Naive thymus-derived CD4-positive, alpha-beta T cell (primary cell): ENCODE measurements at regions of chr13 and their contacts with region 1.

Region 1: DNA sequence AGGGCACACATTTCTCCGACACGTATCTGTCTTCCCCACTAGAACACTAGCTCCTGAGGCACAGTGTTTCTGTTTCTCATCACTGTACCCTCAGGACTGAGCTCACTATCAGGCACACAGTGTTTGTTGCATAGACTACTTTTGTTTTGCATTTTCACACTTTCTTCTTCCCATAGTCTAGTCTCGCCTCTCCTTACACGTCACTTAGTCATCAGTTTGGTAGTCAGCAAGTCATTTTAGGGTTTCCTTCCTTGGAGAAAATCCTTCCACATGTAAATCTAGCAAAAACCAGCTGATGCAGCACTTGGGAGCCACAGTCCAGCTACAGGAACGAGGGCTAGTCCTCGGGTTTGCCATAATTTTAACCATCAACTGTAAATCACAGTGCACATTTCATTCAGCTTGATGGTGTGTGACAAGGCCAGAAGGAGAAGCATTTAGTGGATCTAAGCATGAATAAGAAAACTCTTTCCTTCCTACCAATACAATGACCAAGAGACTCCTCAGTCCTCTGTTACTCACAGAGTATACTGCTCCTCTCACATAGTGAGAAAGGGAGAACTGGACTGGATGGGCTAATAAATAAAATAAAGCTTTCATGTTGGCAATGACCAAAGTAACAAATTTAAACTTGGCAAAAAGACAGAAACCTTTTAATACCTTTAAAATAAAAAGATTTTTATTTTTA is 221.0 kb downstream of the KLF12 start:
- DNase-seq: no peak
- ATAC-seq: no peak
- H3K4me3 ChIP-seq: no peak overlapping the region
- H3K4me3 Mint-ChIP-seq: no peak overlapping the region
- H3K27ac ChIP-seq: no peak overlapping the region
- H3K27ac Mint-ChIP-seq: peak overlapping the region in 5 of 9 donors; percentile 3 to 62 (median 27)
- H3K4me1 ChIP-seq: peaks cover 0 to 8% of the 10 kb centered on the region in 2 donors
- H3K4me1 Mint-ChIP-seq: peaks cover 5 to 67% (median 61%) of the 10 kb centered on the region in 7 donors
- H3K27me3 ChIP-seq: no peaks in the 10 kb centered on the region
- H3K27me3 Mint-ChIP-seq: peaks cover 0 to 2% (median 0%) of the 10 kb centered on the region in 5 donors

Region 2: GRCh38 chr13:73865027-73865426 is 48.2 kb before region 1 on chr13:
- CTCF ChIA-PET with region 1: no interaction called
- POLR2A ChIA-PET with region 1: no interaction called
- intact Hi-C with region 1: loop called in 1 of 2 experiments (anchors 5 kb)
- DNase-seq: no peak
- ATAC-seq: no peak
- H3K4me3 ChIP-seq: no peak overlapping the region
- H3K4me3 Mint-ChIP-seq: no peak overlapping the region
- H3K27ac ChIP-seq: no peak overlapping the region
- H3K27ac Mint-ChIP-seq: peak overlapping the region in 4 of 9 donors; percentile 6 to 67 (median 56)
- H3K4me1 ChIP-seq: peaks cover 0 to 12% of the 10 kb centered on the region in 2 donors
- H3K4me1 Mint-ChIP-seq: peaks cover 5 to 83% (median 62%) of the 10 kb centered on the region in 7 donors
- H3K27me3 ChIP-seq: no peaks in the 10 kb centered on the region
- H3K27me3 Mint-ChIP-seq: no peaks in the 10 kb centered on the region

Region 3: GRCh38 chr13:73924607-73925006 is 11.4 kb after region 1 on chr13:
- CTCF ChIA-PET with region 1: no interaction called
- POLR2A ChIA-PET with region 1: no interaction called
- intact Hi-C with region 1: no loop called
- DNase-seq: no peak
- ATAC-seq: no peak
- H3K4me3 ChIP-seq: no peak overlapping the region
- H3K4me3 Mint-ChIP-seq: peak overlapping the region in 6 of 10 donors; percentile 10 to 49 (median 41)
- H3K27ac ChIP-seq: no peak overlapping the region
- H3K27ac Mint-ChIP-seq: peak overlapping the region in 5 of 9 donors; percentile 12 to 45 (median 33)
- H3K4me1 ChIP-seq: peaks cover 10 to 38% of the 10 kb centered on the region in 2 donors
- H3K4me1 Mint-ChIP-seq: peaks cover 21 to 95% (median 85%) of the 10 kb centered on the region in 7 donors
- H3K27me3 ChIP-seq: no peaks in the 10 kb centered on the region
- H3K27me3 Mint-ChIP-seq: no peaks in the 10 kb centered on the region